ENCODE measurements at regions of chr15 and their contacts with region 1.

Region 1: GRCh38 chr15:61834076-61834697 is 226.1 kb downstream of the VPS13C start:
- DNase-seq: peak; percentile 75
- H3K4me3 ChIP-seq: peak overlapping the region in 1 of 2 experiments; percentile 5; a peak in 1 of 4 replicates
- H3K27ac ChIP-seq: no peak overlapping the region
- H3K4me1 ChIP-seq: peaks cover 0 to 18% of the 10 kb centered on the region in 2 experiments; a peak in 1 of 4 replicates
- H3K27me3 ChIP-seq: no peaks in the 10 kb centered on the region
- CTCF ChIP-seq: peak; percentile 93
- EP300 ChIP-seq: no peak
- RAD21 ChIP-seq: peak; percentile 96

Region 2: GRCh38 chr15:60585743-60586708 is 1248.2 kb before region 1 on chr15:
- CTCF ChIA-PET with region 1: interaction called, 86 read pairs
- POLR2A ChIA-PET with region 1: no interaction called
- DNase-seq: peak; percentile 66
- H3K4me3 ChIP-seq: no peak overlapping the region; a peak in 1 of 4 replicates
- H3K27ac ChIP-seq: no peak overlapping the region
- H3K4me1 ChIP-seq: peaks cover 0 to 3% of the 10 kb centered on the region in 2 experiments; a peak in 3 of 4 replicates
- H3K27me3 ChIP-seq: no peaks in the 10 kb centered on the region
- CTCF ChIP-seq: peak; percentile 98
- EP300 ChIP-seq: no peak
- RAD21 ChIP-seq: peak; percentile 97

Region 3: GRCh38 chr15:61141497-61142125 is 692.6 kb before region 1 on chr15:
- CTCF ChIA-PET with region 1: interaction called, 12 read pairs
- POLR2A ChIA-PET with region 1: no interaction called
- DNase-seq: no peak
- H3K4me3 ChIP-seq: no peak overlapping the region
- H3K27ac ChIP-seq: no peak overlapping the region
- H3K4me1 ChIP-seq: peaks cover 0 to 10% of the 10 kb centered on the region in 2 experiments; a peak in 2 of 4 replicates
- H3K27me3 ChIP-seq: no peaks in the 10 kb centered on the region
- CTCF ChIP-seq: no peak
- EP300 ChIP-seq: no peak
- RAD21 ChIP-seq: no peak

Region 4: DNA sequence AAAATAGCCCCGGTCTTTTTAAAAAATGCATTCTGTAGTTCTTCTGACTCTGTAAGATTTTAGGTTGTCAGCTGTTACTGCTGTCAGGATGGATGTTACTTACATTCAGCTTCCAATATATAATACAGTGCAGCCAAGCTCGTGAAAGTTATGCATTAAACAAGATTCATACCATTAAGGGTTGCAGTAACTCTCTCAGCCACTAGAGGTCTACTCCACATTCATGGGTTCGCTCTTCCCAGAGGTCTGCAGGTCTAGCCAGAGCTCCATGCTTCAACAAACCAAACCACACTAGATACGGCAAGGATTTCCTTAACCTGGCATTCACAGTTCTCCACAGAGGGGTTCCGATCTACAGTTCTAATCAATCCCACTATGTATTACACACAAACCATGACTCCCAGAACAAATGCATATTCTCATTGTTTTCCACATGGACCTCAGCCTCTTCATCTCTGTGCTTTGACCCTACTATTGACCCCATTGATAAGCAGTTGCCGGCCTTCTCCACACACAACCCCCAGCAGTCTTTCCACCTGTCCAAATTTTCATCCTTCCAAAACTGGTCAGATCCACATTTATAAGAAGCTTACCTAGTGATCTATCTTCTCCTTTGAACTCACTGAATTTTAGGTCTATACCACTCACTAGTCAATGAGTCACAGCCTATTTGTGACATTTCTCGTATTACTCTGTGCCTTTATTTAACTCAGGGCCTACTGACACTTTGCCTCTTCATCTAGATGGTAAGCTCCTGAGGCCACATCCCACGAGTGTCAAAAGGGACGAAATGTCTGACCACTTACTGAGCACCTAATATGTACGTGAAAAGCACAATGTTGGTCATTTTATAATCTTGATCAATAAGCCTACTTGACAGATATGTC is 638.8 kb before region 1 on chr15:
- CTCF ChIA-PET with region 1: interaction called, 31 read pairs
- POLR2A ChIA-PET with region 1: no interaction called
- DNase-seq: peak; percentile 39
- H3K4me3 ChIP-seq: no peak overlapping the region
- H3K27ac ChIP-seq: no peak overlapping the region
- H3K4me1 ChIP-seq: peaks cover 0 to 12% of the 10 kb centered on the region in 2 experiments; a peak in 1 of 4 replicates
- H3K27me3 ChIP-seq: no peaks in the 10 kb centered on the region
- CTCF ChIP-seq: peak; percentile 72
- EP300 ChIP-seq: no peak
- RAD21 ChIP-seq: peak; percentile 68

Region 5: GRCh38 chr15:61621146-61621545 is 213.0 kb before region 1 on chr15:
- CTCF ChIA-PET with region 1: interaction called, 48 read pairs
- POLR2A ChIA-PET with region 1: no interaction called
- DNase-seq: peak; percentile 61
- H3K4me3 ChIP-seq: no peak overlapping the region
- H3K27ac ChIP-seq: no peak overlapping the region
- H3K4me1 ChIP-seq: no peaks in the 10 kb centered on the region
- H3K27me3 ChIP-seq: no peaks in the 10 kb centered on the region
- CTCF ChIP-seq: peak; percentile 64
- EP300 ChIP-seq: no peak
- RAD21 ChIP-seq: peak; percentile 87

Region 6: DNA sequence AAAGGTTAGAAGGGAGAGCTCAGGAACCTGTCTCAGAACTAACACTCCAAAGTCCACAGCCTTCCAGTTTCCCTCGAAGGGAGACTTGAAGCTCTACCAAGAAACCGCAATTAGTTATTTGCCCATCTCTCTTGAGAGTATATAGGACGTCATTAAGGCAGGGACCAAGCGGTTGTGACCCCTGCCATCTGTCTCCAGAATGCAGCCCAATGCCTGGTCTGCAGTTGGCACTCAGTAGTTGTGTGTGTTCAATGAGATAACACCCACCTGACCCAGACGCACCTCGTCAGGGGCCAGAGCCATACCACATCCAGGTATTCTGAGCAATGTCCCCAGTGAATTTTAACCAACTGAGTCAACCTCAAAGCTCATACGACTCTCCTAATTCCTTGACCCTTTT is 25.0 kb before region 1 on chr15:
- CTCF ChIA-PET with region 1: interaction called, 12 read pairs
- POLR2A ChIA-PET with region 1: no interaction called
- DNase-seq: no peak
- H3K4me3 ChIP-seq: no peak overlapping the region
- H3K27ac ChIP-seq: no peak overlapping the region
- H3K4me1 ChIP-seq: peaks cover 0 to 7% of the 10 kb centered on the region in 2 experiments; a peak in 1 of 4 replicates
- H3K27me3 ChIP-seq: no peaks in the 10 kb centered on the region; the same call in 1 of the 2 replicates
- CTCF ChIP-seq: no peak
- EP300 ChIP-seq: no peak
- RAD21 ChIP-seq: no peak

Region 7: DNA sequence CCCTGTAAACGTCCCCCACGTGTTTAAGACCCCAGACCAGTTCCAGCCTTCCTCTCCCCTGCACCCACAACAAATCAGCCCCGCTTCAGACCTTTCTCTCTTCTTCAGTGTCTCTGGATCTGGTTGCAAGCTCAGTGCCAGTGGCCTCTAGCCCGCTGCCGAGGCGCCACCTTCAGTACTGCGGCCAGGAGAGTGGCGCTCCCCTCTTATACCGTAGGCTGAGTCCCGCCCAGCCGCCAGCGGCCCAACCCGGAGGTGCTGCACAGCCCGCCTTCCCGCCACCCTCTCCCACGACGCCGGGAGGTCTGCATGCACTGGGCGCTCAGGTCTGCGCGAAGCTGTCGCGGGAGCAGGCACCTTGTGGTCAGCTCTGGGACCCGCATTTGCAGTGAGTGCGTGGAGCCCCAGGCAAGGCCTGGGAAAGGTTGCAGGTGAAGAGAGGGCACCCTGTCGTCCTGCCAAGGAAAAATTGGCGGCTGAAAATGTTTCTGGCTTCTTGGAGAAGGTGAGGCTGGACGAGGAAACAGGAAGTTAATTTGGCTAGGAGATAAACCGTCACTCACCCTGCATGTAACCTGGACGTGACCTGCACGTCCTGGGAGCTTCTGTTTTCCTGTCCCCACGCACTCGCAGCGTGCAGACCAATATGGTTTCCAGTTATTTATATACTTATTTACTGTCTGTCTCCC is 331.1 kb after region 1 on chr15 and contains the start of gene C2CD4B:
- CTCF ChIA-PET with region 1: no interaction called
- POLR2A ChIA-PET with region 1: no interaction called
- DNase-seq: peak; percentile 58
- H3K4me3 ChIP-seq: peak within 1 kb of the TSS; percentile 35 to 42; a peak in 3 of 4 replicates
- H3K27ac ChIP-seq: no peak within 1 kb of the TSS
- H3K4me1 ChIP-seq: no peaks in the 10 kb centered on the region; a peak in 1 of 4 replicates
- H3K27me3 ChIP-seq: peaks cover 32% of the 10 kb centered on the region; the same call in 1 of the 2 replicates
- CTCF ChIP-seq: no peak
- EP300 ChIP-seq: no peak
- RAD21 ChIP-seq: no peak
- polyA plus RNA-seq, gene C2CD4B: not detected in 2 replicates

Region 8: GRCh38 chr15:62209322-62209721 is 375.1 kb after region 1 on chr15:
- CTCF ChIA-PET with region 1: no interaction called
- POLR2A ChIA-PET with region 1: no interaction called
- DNase-seq: no peak
- H3K4me3 ChIP-seq: no peak overlapping the region
- H3K27ac ChIP-seq: no peak overlapping the region
- H3K4me1 ChIP-seq: no peaks in the 10 kb centered on the region
- H3K27me3 ChIP-seq: no peaks in the 10 kb centered on the region
- CTCF ChIP-seq: no peak
- EP300 ChIP-seq: no peak
- RAD21 ChIP-seq: no peak

Region 9: DNA sequence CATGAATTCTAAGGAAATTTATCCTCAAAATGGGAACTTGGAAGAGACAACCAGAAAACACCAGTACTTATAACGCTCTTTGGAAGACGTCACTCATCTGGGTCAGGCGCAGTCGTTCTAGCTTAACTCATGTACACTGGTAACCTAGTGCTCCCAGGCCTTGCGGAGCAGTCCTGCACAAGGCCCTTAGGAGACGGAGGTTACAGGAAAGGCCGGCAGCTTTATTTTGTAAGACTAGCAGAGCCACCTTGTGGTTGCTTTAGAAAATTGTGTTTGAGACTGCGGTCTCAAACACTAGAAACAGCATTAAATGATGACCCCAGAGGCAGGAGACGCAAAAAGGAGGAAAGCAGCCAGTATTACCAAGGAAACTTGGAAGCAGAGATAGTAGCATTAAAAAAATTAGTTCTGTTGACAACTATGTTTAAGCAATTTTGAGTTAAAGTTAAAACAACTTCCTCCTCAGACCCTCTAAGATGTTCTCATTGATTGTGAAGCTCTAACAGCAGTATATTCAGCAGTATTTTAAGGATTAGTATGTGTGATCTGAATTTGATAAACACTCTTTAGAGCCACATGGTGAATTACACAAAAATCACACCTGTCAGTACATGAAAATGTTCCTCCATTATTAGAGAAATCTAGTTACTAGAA is 472.8 kb after region 1 on chr15:
- CTCF ChIA-PET with region 1: interaction called, 10 read pairs
- POLR2A ChIA-PET with region 1: no interaction called
- DNase-seq: peak; percentile 72
- H3K4me3 ChIP-seq: peak overlapping the region in 1 of 2 experiments; percentile 17; a peak in 1 of 4 replicates
- H3K27ac ChIP-seq: peak overlapping the region; percentile 28 to 61; a peak in 2 of 4 replicates
- H3K4me1 ChIP-seq: peaks cover 8 to 15% of the 10 kb centered on the region in 2 experiments
- H3K27me3 ChIP-seq: no peaks in the 10 kb centered on the region
- CTCF ChIP-seq: peak; percentile 78
- EP300 ChIP-seq: no peak
- RAD21 ChIP-seq: peak; percentile 92

Measured in SK-N-SH (cell line).